ENCODE measurements at regions of chr10 and their contacts with region 1.

Region 1: GRCh38 chr10:96374985-96375830 is 16.4 kb upstream of the OPALIN start:
- DNase-seq: peak; percentile 87
- H3K4me3 ChIP-seq: peak overlapping the region; percentile 36 to 48 (median 45)
- H3K27ac ChIP-seq: no peak overlapping the region
- H3K4me1 ChIP-seq: peaks cover 3% of the 10 kb centered on the region
- H3K27me3 ChIP-seq: no peaks in the 10 kb centered on the region
- CTCF ChIP-seq: peak; percentile 97 to 99

Region 2: DNA sequence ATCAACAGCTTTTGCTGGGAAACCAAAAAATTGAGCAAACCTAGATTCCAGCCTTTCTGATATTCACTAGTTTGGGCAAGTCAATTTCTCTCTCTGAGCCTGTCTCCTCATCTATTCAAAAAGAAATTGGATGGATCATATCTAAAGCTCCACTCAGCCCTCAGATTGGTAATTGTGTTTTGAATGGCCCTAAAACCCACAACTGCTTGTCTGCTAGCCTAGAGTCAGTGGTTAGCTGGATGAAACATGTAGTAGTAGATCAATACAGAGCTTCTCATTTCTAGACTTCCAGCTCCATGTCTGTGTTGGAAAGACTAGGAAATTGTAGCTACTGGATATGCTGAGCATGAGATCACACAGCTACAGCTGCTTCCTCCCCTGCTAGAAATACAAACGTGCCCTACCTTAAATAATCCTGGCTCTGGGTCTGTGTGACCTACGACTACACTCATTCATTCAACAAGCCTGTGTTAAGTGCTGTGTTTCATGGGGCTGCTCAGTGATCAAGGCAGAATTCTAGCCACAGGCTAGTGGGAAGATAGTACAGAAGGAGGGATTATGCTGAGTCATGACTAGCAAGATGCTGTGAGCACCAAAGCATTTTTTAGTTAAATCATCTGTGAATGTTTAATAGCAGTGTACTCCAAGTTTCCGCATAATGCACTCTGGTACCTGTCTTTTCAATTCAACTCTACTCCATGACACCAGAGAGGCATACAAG is 55.3 kb before region 1 on chr10:
- CTCF ChIA-PET with region 1: no interaction called
- dilution Hi-C with region 1: no loop called
- in situ Hi-C with region 1: no loop called
- intact Hi-C with region 1: no loop called
- DNase-seq: no peak
- H3K4me3 ChIP-seq: no peak overlapping the region
- H3K27ac ChIP-seq: no peak overlapping the region
- H3K4me1 ChIP-seq: no peaks in the 10 kb centered on the region
- H3K27me3 ChIP-seq: no peaks in the 10 kb centered on the region
- CTCF ChIP-seq: no peak

Region 3: GRCh38 chr10:96491299-96491698 is 116.1 kb after region 1 on chr10:
- CTCF ChIA-PET with region 1: interaction called, 5 read pairs
- dilution Hi-C with region 1: no loop called
- in situ Hi-C with region 1: no loop called
- intact Hi-C with region 1: loop called (anchors 2 kb)
- DNase-seq: no peak
- H3K4me3 ChIP-seq: no peak overlapping the region
- H3K27ac ChIP-seq: no peak overlapping the region
- H3K4me1 ChIP-seq: no peaks in the 10 kb centered on the region
- H3K27me3 ChIP-seq: peaks cover 2% of the 10 kb centered on the region
- CTCF ChIP-seq: peak; percentile 41 to 73

Region 4: GRCh38 chr10:96541921-96542320 is 166.7 kb after region 1 on chr10:
- CTCF ChIA-PET with region 1: no interaction called
- dilution Hi-C with region 1: no loop called
- in situ Hi-C with region 1: no loop called
- intact Hi-C with region 1: no loop called
- DNase-seq: peak; percentile 3
- H3K4me3 ChIP-seq: no peak overlapping the region
- H3K27ac ChIP-seq: no peak overlapping the region
- H3K4me1 ChIP-seq: no peaks in the 10 kb centered on the region
- H3K27me3 ChIP-seq: no peaks in the 10 kb centered on the region
- CTCF ChIP-seq: no peak

Region 5: DNA sequence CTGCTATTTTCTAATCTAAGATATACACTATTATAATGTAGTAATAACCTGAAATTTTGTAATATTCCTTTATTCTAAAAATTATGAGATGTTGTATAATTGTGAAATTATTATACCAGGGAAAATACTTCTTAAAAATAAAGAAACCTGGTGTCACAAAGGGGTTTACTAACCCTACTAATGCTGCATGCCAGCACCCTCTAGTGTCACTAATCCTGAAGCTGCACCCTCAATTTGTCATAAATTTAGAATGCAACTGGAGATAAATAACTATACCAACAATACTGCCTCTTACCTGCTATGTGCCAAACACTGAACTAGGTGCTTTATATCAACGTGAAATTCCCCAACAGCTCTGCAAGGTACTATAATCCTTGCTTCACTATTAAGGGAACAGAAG is 180.8 kb after region 1 on chr10:
- CTCF ChIA-PET with region 1: interaction called, 3 read pairs
- dilution Hi-C with region 1: no loop called
- in situ Hi-C with region 1: no loop called
- intact Hi-C with region 1: loop called (anchors 2 kb)
- DNase-seq: no peak
- H3K4me3 ChIP-seq: no peak overlapping the region
- H3K27ac ChIP-seq: no peak overlapping the region
- H3K4me1 ChIP-seq: no peaks in the 10 kb centered on the region
- H3K27me3 ChIP-seq: no peaks in the 10 kb centered on the region
- CTCF ChIP-seq: peak; percentile 21 to 48

Region 6: DNA sequence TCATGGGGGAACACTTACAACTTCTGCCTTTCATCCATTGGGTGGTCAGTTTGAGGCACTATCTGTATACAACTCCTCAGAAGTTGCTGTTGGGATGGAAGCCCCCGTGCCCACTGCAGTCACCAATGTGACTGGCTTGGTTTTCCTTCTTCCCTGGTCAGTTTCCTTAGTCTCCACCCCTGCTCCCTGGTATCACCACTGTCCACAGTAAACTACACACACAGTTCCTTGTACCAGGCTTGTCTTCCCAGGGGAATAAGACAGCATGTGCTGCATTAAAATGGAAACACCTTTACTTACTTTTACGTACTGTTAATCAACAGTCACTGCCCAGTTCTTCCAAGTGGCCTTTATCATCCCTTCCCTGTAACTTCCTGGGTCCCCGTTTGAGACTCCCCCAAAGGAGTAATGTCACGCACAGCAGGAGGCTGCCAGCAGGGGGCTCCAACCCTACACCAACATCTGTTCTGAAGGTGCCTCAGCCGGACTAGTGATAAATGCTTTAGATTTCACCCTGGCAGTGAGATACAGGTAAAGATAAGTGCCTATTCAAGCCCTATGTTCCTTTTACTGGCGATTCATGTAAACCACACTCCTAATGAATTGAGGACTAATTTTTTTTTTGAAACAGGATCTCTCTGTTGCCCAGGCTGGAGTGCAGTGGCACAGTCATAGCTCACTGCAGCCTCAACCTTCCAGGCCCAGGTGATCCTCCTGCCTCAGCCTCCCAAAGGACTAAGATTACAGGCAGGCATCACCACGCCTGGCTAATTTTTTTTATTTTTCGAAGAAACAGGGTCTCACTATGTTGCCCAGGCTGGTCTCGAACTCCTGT is 390.4 kb after region 1 on chr10:
- CTCF ChIA-PET with region 1: no interaction called
- dilution Hi-C with region 1: no loop called
- in situ Hi-C with region 1: no loop called
- intact Hi-C with region 1: loop called (anchors 1 kb)
- DNase-seq: peak; percentile 47
- H3K4me3 ChIP-seq: no peak overlapping the region
- H3K27ac ChIP-seq: no peak overlapping the region
- H3K4me1 ChIP-seq: no peaks in the 10 kb centered on the region
- H3K27me3 ChIP-seq: no peaks in the 10 kb centered on the region
- CTCF ChIP-seq: peak; percentile 86 to 91

Region 7: GRCh38 chr10:97196223-97197029 is 821.2 kb after region 1 on chr10:
- CTCF ChIA-PET with region 1: no interaction called
- dilution Hi-C with region 1: no loop called
- in situ Hi-C with region 1: no loop called
- intact Hi-C with region 1: no loop called
- DNase-seq: peak; percentile 23
- H3K4me3 ChIP-seq: peak overlapping the region; percentile 2 to 36 (median 31)
- H3K27ac ChIP-seq: no peak overlapping the region
- H3K4me1 ChIP-seq: no peaks in the 10 kb centered on the region
- H3K27me3 ChIP-seq: no peaks in the 10 kb centered on the region
- CTCF ChIP-seq: peak; percentile 58 to 73